ENCODE measurements at regions of chr5 and their contacts with region 1.

Region 1: DNA sequence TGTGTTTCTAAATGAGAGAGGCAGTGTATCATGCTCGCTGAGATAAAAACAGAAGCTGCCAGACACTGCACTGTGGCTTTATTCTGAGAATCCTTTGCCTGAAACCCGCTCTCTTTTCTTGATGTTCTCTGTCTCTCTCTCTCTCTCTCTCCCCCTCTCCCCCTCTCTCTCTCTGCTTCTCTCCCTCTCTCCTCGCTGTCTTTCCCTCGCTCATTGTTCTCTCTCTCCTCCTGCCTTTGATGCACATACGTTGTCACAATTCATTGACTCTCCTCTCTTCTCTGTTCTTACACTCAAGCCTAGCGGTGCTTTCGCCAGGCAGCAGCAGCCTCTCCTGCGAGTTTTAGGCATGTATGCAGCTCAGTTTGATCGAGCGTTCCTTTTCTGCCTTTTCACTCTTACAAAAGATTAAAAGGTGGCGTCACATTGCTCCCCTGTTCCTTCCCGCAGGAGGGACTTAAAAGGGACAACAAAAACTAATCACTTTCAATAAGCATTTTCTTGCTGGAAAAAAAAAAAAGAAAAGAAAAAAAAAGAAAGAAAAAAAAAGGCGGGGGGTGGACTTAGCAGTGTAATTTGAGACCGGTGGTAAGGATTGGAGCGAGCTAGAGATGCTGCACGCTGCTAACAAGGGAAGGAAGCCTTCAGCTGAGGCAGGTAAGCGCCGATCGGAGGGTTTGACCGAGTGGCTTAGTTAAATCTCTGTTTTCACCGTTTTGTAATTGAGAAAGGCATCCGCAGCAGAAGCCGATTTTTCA is 717.9 kb upstream of the WWC1 start:
- DNase-seq: peak; percentile 80
- H3K4me3 ChIP-seq: peak overlapping the region; percentile 60
- H3K27ac ChIP-seq: peak overlapping the region; percentile 82
- H3K4me1 ChIP-seq: peaks cover 34% of the 10 kb centered on the region
- H3K27me3 ChIP-seq: no peaks in the 10 kb centered on the region
- CTCF ChIP-seq: peak; percentile 17; the same call in 1 of the 2 replicates

Region 2: DNA sequence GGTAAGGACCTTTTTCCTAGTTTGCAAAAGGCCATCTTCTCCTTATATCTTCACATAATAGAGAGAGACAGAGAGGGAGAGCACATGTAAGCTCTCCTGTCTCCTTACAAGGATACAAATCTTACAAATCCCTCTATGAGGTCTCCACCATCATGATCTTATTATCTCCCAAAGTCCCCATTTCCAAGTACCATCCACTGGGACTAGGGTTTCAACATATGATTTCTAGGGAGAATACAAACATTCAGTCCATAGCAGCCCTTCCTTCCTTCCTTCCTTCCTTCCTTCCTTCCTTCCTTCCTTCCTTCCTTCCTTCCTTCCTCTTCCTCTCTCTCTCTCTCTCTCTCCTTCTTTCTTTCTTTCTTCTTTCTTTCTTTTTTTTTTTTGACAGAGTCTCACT is 415.0 kb before region 1 on chr5:
- CTCF ChIA-PET with region 1: no interaction called
- POLR2A ChIA-PET with region 1: interaction called, 22 read pairs
- intact Hi-C with region 1: no loop called
- DNase-seq: peak; percentile 78
- H3K4me3 ChIP-seq: no peak overlapping the region
- H3K27ac ChIP-seq: peak overlapping the region; percentile 92
- H3K4me1 ChIP-seq: peaks cover 49% of the 10 kb centered on the region
- H3K27me3 ChIP-seq: no peaks in the 10 kb centered on the region
- CTCF ChIP-seq: no peak

Region 3: GRCh38 chr5:167763772-167764171 is 190.2 kb after region 1 on chr5:
- CTCF ChIA-PET with region 1: no interaction called
- POLR2A ChIA-PET with region 1: no interaction called
- intact Hi-C with region 1: loop called (anchors 10 kb)
- DNase-seq: no peak
- H3K4me3 ChIP-seq: no peak overlapping the region
- H3K27ac ChIP-seq: peak overlapping the region; percentile 73
- H3K4me1 ChIP-seq: peaks cover 58% of the 10 kb centered on the region
- H3K27me3 ChIP-seq: no peaks in the 10 kb centered on the region
- CTCF ChIP-seq: no peak

Region 4: GRCh38 chr5:167892352-167893115 is 319.0 kb after region 1 on chr5:
- CTCF ChIA-PET with region 1: no interaction called
- POLR2A ChIA-PET with region 1: interaction called, 8 read pairs
- intact Hi-C with region 1: loop called (anchors 1 kb)
- DNase-seq: no peak
- H3K4me3 ChIP-seq: no peak overlapping the region
- H3K27ac ChIP-seq: peak overlapping the region; percentile 93
- H3K4me1 ChIP-seq: peaks cover 67% of the 10 kb centered on the region
- H3K27me3 ChIP-seq: no peaks in the 10 kb centered on the region
- CTCF ChIP-seq: no peak

Region 5: GRCh38 chr5:167969998-167970397 is 396.4 kb after region 1 on chr5:
- CTCF ChIA-PET with region 1: no interaction called
- POLR2A ChIA-PET with region 1: no interaction called
- intact Hi-C with region 1: loop called (anchors 5 kb)
- DNase-seq: peak; percentile 66
- H3K4me3 ChIP-seq: peak overlapping the region; percentile 0
- H3K27ac ChIP-seq: peak overlapping the region; percentile 70
- H3K4me1 ChIP-seq: peaks cover 81% of the 10 kb centered on the region
- H3K27me3 ChIP-seq: no peaks in the 10 kb centered on the region
- CTCF ChIP-seq: peak; percentile 46; the same call in 1 of the 2 replicates

Region 6: DNA sequence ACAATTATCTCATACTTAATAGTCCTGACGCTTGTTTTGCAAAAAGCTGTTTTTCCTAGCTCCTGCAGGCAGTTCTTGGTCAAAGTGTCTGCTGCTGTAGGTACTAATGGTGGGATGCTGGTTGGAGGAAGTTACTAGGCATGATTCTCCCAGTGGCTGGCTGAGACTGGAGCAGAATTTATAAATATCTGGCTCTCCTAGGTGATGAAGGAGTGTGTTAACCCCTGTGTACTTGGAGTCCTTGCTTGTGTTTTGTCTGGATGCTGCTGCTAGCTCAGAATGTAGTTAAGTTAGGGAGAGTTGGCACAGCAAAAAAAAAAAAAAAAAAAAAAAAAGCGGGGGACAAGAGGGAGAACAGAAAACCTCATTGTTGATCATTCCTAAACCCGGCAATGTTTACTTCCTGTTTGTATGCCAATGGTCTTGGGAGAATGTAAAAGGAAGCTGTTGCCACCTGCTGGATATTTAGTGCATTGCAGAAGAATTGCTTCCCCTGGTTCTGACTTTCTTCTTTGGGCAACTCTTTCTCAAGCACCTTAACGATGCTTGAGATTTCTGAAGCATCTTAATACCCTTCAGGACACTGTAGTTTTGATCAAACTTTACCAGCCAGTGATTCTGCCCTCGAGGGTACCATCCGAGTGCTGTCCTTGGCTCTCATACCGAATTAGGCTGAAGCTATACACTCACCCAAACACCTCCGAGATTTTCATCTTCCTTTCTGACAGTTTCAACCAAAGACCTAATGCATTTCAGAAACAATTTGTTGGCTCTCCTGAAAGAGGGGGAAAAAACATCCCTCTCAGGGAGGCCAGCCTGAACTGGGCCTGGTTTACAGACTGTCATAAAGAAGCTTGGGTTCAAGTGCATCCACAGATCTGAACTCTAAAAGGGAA is 646.2 kb after region 1 on chr5:
- CTCF ChIA-PET with region 1: interaction called, 4 read pairs
- POLR2A ChIA-PET with region 1: no interaction called
- intact Hi-C with region 1: loop called (anchors 5 kb)
- DNase-seq: peak; percentile 83
- H3K4me3 ChIP-seq: no peak overlapping the region
- H3K27ac ChIP-seq: peak overlapping the region; percentile 44
- H3K4me1 ChIP-seq: peaks cover 47% of the 10 kb centered on the region
- H3K27me3 ChIP-seq: no peaks in the 10 kb centered on the region
- CTCF ChIP-seq: peak; percentile 78

Region 7: GRCh38 chr5:168238463-168238862 is 664.9 kb after region 1 on chr5:
- CTCF ChIA-PET with region 1: interaction called, 5 read pairs
- POLR2A ChIA-PET with region 1: interaction called, 3 read pairs
- intact Hi-C with region 1: loop called (anchors 5 kb)
- DNase-seq: peak; percentile 92
- H3K4me3 ChIP-seq: no peak overlapping the region
- H3K27ac ChIP-seq: peak overlapping the region; percentile 77
- H3K4me1 ChIP-seq: peaks cover 26% of the 10 kb centered on the region
- H3K27me3 ChIP-seq: no peaks in the 10 kb centered on the region
- CTCF ChIP-seq: no peak